Activated T-helper 2 cell treated with anti-CD3 and anti-CD28 coated beads, Interferon-gamma antibody, Interleukin-2, Interleukin-4, amounts not matched to agents 10 μg/mL and 5 μg/mL and 100 μg/mL, durations not matched to agents 14 hours and 24 hours and 36 hours (primary cell): ENCODE measurements at regions of chr6 and their contacts with region 1.

Region 1: GRCh38 chr6:30102970-30103874 is 9.7 kb downstream of the TRIM31 start:
- DNase-seq: peak; percentile 79
- H3K4me3 Mint-ChIP-seq: peak overlapping the region; percentile 77
- H3K27ac Mint-ChIP-seq: peak overlapping the region; percentile 5
- H3K4me1 Mint-ChIP-seq: peaks cover 26% of the 10 kb centered on the region
- H3K27me3 Mint-ChIP-seq: peaks cover 60% of the 10 kb centered on the region

Region 2: DNA sequence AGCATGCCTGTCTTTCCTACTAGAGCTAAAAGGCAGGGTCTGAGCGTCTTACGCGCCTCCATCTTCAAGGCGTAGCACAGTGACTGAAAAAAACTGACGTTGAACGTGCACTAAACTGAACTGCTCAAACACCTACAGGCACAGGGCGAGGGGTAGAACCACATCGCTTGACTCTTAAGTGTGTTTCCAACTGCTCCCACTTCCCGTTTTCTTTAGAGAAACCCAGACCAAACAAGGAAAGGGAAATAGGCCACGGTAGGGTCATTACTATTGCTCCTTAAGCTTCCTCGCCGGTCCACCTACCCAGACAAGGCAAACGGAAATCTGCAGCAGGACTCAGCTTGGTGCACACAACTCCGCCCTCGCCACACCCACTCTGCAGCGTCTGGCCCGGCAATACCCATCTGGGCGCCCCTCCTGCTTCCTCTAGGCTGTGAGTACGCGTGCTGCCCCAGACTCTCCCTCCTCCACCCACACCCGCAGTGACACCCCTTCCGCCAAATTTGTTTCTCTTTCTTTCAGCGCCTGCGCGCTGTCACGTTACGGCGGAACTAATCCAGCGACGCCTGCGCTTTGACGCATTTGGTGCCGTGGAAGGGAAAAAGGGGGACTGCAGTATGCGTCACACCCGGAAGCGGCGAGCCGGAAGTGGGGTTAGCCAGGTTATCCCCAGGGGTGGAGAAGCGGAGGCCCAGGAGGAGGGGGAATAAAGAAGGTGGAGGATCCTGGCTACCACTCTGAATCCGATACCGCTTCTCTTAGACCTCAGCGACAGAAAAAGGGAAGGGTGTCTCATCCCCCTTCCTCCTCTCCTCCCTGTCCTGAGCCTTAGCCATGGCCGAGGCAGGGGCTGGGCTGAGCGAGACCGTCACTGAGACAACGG is 36.4 kb before region 1 on chr6 and contains the start of gene PPP1R11:
- intact Hi-C with region 1: loop called (anchors 5 kb)
- DNase-seq: peak; percentile 99
- H3K4me3 Mint-ChIP-seq: peak within 1 kb of the TSS; percentile 93
- H3K27ac Mint-ChIP-seq: peak within 1 kb of the TSS; percentile 96
- H3K4me1 Mint-ChIP-seq: peaks cover 42% of the 10 kb centered on the region
- H3K27me3 Mint-ChIP-seq: peaks cover 10% of the 10 kb centered on the region
- total RNA-seq, gene PPP1R11: 55.9 and 56.1 TPM in 2 replicates

Region 3: DNA sequence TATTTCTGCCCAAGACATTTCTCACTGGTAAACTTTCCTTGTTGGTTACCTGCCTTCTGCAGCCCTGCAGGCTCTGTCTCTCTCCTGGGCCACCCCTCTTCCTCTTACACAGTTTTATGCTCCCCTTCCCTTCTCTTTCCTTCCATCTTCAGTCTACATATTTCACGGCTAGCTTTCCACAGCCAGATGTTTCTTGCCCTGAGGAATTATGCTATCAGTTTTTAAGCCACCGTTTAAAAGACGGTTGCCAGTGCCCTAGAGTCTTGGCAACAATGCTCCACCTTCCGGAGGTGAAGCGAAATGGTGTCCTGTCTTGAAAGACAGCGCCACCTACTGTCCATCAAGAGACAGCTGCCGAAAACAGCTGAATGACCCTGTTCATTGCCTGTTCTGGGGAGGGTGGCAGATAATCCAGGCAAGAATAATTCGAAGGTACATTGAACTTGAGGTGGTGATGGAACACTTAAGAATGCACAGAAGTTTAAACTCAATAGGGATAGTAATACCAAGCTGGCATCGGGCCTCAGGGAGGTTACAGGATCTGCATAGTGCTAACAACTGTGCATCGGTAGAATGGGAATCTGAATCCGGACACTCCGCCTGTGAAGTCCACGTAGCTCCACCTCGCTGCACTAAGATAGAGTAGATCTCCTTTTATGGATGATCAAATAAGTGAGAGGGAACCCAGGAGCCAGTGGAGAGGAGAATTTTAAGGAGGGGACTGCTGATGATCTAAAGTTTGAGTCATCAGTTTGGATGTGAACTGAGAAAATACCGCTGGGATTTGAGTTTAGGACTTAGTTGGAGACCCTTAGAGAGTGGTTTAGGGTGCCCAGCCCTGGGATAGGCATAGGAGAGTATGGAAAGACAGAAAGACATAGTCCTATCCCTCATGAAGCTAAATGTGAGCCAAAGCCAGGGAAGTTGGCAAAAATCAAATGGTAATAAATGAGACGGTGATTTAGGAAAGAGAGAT is 28.0 kb after region 1 on chr6:
- intact Hi-C with region 1: loop called (anchors 1 kb)
- DNase-seq: peak; percentile 56
- H3K4me3 Mint-ChIP-seq: no peak overlapping the region
- H3K27ac Mint-ChIP-seq: no peak overlapping the region
- H3K4me1 Mint-ChIP-seq: peaks cover 18% of the 10 kb centered on the region
- H3K27me3 Mint-ChIP-seq: peaks cover 69% of the 10 kb centered on the region

Region 4: DNA sequence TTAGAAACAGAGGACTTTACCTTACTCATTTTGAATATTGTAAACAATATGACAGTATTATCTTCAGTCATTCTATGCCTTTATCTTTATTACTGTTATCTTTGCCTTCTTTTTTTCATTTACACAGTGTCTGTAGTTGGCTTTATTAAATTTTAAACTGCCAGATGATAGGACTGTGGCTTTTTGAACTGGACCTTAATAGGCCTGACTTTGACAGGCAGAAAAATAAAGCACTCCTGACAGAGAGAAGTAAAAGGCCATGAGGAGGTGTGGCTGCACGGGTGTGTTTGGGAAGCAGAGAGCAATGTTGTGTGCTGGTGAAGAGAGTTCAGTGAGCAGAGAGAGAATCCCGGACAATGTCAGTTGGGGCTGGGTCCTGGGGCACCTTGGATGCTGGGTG is 40.6 kb after region 1 on chr6:
- intact Hi-C with region 1: no loop called
- DNase-seq: no peak
- H3K4me3 Mint-ChIP-seq: no peak overlapping the region
- H3K27ac Mint-ChIP-seq: no peak overlapping the region
- H3K4me1 Mint-ChIP-seq: peaks cover 7% of the 10 kb centered on the region
- H3K27me3 Mint-ChIP-seq: peaks cover 46% of the 10 kb centered on the region

Region 5: DNA sequence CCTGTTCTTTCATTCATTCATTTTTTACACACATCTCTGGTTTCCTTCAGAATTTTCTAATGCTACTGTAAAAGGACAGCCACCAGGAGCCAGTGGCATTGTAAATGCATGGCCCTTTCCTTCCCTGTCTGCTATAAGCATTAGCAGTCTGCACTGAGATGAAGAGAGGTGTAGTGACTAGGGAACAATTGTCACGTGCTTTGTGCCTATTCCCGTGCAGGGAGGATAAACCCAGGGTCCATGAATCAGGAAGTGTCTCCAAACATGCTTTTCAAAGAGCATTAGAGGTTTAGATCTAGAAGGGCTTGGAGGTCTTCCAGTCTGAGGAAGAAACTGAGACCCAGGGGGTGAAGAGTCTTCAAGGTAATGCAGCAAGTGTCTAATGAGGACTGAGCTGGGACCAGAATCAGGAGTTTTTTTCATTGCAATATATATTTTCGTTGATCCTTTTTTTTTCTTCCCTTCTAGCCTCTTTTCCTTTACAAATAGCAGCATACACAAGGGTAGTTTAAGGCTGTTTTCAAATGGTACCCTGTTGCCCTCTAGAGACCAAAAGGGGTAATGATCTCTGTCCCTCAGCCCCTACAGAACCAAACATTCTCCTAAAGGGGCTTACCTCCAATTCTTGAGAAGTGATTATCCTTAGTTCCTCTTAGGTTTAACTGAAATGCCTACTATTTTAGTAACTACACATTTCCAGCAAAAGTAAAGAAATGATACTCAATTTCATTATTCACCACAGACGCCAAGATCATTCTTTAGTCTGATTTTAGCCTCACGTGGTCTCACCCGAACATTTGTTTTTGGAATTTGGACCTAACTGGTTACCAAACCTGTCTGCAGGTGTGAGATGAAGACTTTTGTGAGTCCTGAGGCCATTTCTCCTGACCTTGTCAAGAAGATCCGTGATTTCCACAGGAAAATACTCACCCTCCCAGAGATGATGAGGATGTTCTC is 66.7 kb after region 1 on chr6:
- intact Hi-C with region 1: loop called (anchors 1 kb)
- DNase-seq: peak; percentile 8
- H3K4me3 Mint-ChIP-seq: no peak overlapping the region
- H3K27ac Mint-ChIP-seq: no peak overlapping the region
- H3K4me1 Mint-ChIP-seq: peaks cover 23% of the 10 kb centered on the region
- H3K27me3 Mint-ChIP-seq: peaks cover 38% of the 10 kb centered on the region